GM12878 (cell line): ENCODE measurements at regions of chr15 and their contacts with region 1.

Region 1: DNA sequence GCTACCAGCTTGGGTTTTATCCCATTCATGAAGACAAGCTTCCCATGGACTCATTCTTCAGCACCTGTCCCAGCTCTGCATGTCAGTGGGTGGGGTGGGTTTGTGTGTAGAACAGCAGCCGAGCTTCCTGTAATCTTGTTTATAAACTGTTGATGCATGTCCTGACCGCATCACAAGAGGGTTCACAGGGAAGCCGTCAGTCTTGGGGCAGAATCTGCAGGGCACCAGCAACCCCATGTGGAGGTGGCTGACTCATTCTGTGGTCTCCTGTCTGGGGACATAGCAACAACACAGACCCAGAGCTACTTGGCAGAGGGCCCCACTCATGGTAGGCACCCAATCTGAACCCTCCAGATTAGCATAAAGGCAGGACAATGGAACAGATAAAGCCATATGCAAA is 35.6 kb downstream of the DAPK2 start:
- DNase-seq: peak; percentile 96
- ATAC-seq: peak; percentile 98
- H3K4me3 ChIP-seq: no peak overlapping the region
- H3K27ac ChIP-seq: peak overlapping the region; percentile 76
- H3K4me1 ChIP-seq: peaks cover 32% of the 10 kb centered on the region
- H3K27me3 ChIP-seq: no peaks in the 10 kb centered on the region
- CTCF ChIP-seq: peak; percentile 36 to 71 (median 54)
- EP300 ChIP-seq: peak; percentile 61 to 78; a peak in 2 of 4 replicates
- POLR2A ChIP-seq: no peak
- RAD21 ChIP-seq: peak; percentile 77

Region 2: GRCh38 chr15:63826528-63826927 is 184.2 kb before region 1 on chr15:
- CTCF ChIA-PET with region 1: interaction called, 17 read pairs
- POLR2A ChIA-PET with region 1: interaction called, 3 read pairs
- RAD21 ChIA-PET with region 1: interaction called, 8 read pairs
- SMC1A ChIA-PET with region 1: interaction called, 13 read pairs
- in situ Hi-C with region 1: no loop called
- intact Hi-C with region 1: no loop called
- DNase-seq: no peak
- ATAC-seq: no peak
- H3K4me3 ChIP-seq: no peak overlapping the region
- H3K27ac ChIP-seq: no peak overlapping the region
- H3K4me1 ChIP-seq: no peaks in the 10 kb centered on the region
- H3K27me3 ChIP-seq: no peaks in the 10 kb centered on the region
- CTCF ChIP-seq: peak; percentile 21 to 31 (median 27); a peak in 3 of 6 replicates
- EP300 ChIP-seq: no peak
- POLR2A ChIP-seq: no peak
- RAD21 ChIP-seq: peak; percentile 44

Region 3: DNA sequence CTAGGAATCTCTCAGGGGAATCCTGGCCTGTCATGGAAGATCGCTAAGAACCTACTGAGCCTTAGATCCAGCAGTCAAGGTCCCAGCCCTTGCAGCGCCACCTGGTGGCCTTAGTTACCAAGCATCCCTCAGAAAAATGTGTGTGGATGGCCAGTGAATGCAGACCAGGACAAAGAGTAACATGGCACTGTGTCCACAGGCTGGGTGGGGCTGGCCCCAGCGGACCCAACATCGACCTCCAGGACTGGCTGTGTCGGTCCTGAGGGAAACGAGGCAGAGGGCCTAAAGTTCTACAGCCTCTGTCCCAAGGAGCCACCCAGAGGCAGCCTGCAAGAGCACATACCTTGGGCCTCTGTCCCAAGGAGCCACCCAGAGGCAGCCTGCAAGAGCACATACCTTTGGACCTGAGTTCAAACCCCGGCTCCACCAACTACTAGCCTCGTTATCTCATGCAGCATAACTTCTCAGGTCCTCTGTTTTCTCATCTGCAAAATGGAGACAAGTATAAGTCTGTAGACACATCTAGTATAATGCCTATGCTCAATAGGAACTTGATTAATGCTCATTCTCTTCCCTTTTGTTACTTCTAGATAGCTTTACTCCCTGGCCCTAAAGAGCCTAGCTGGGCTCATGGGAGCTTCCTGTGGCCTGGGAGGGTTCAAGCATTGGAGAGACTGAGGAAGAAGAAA is 119.5 kb before region 1 on chr15:
- CTCF ChIA-PET with region 1: interaction called, 46 read pairs
- POLR2A ChIA-PET with region 1: interaction called, 7 read pairs
- RAD21 ChIA-PET with region 1: interaction called, 46 read pairs
- SMC1A ChIA-PET with region 1: interaction called, 57 read pairs
- in situ Hi-C with region 1: no loop called
- intact Hi-C with region 1: no loop called
- DNase-seq: peak; percentile 72
- ATAC-seq: peak; percentile 67
- H3K4me3 ChIP-seq: no peak overlapping the region
- H3K27ac ChIP-seq: peak overlapping the region; percentile 79
- H3K4me1 ChIP-seq: peaks cover 62% of the 10 kb centered on the region
- H3K27me3 ChIP-seq: no peaks in the 10 kb centered on the region
- CTCF ChIP-seq: peak; percentile 80 to 88 (median 86)
- EP300 ChIP-seq: no peak
- POLR2A ChIP-seq: no peak
- RAD21 ChIP-seq: peak; percentile 88

Region 4: DNA sequence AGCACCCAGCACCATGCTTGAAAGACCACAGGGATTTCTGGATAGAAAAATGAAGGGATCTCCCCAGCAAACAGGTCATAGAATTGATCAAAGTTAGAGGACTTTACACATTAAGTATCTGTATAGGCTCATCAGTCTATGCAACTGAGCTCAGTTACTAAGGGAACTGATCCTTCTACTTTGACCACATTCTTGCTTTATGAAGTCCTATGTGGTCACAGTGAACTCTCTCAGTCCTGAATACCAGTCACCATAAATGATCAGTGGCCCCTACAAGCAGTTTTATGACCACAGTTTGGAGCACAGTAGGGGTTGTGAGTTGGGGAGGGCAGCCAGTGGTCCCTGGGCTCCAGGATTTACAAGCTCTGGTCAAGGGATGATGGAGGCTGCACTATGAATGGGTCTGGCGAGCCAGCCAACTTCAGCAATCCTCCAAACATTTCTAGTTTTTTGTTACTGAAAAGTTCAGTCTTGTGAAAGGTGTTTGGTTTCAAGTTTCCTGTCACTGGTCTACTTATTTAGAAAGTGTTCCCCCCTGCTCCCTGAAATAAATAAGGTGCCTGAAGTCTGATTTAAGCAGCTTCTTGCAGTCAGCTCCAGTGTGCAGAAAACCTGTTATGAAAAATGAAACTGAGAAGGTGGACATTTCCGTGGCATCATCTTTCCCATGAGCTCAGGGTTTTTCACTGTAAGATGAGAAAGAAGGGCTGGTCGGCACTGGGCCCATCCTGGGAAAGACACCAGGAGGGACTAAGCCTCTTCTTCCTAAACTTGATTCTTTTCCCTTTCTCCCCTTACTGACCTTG is 39.9 kb before region 1 on chr15:
- CTCF ChIA-PET with region 1: interaction called, 22 read pairs
- POLR2A ChIA-PET with region 1: interaction called, 4 read pairs
- RAD21 ChIA-PET with region 1: interaction called, 40 read pairs
- SMC1A ChIA-PET with region 1: interaction called, 58 read pairs
- in situ Hi-C with region 1: no loop called
- intact Hi-C with region 1: loop called (anchors 1 kb)
- DNase-seq: peak; percentile 85
- ATAC-seq: peak; percentile 96
- H3K4me3 ChIP-seq: peak overlapping the region; percentile 24
- H3K27ac ChIP-seq: peak overlapping the region; percentile 95
- H3K4me1 ChIP-seq: peaks cover 48% of the 10 kb centered on the region
- H3K27me3 ChIP-seq: no peaks in the 10 kb centered on the region
- CTCF ChIP-seq: no peak
- EP300 ChIP-seq: peak; percentile 46 to 90; a peak in 3 of 4 replicates
- POLR2A ChIP-seq: no peak
- RAD21 ChIP-seq: no peak

Region 5: GRCh38 chr15:64024172-64025050 is 13.7 kb after region 1 on chr15:
- CTCF ChIA-PET with region 1: interaction called, 9 read pairs
- POLR2A ChIA-PET with region 1: interaction called, 3 read pairs
- RAD21 ChIA-PET with region 1: interaction called, 5 read pairs
- SMC1A ChIA-PET with region 1: interaction called, 10 read pairs
- in situ Hi-C with region 1: no loop called
- intact Hi-C with region 1: no loop called
- DNase-seq: no peak
- ATAC-seq: peak; percentile 62
- H3K4me3 ChIP-seq: no peak overlapping the region
- H3K27ac ChIP-seq: no peak overlapping the region
- H3K4me1 ChIP-seq: 0 out of 2 replicates have a peak, but pooled peaks cover 4% of the 10 kb centered on the region
- H3K27me3 ChIP-seq: no peaks in the 10 kb centered on the region
- CTCF ChIP-seq: 0 out of 6 replicates have a peak, but pooled peaks of 1 of the 3 experiments have one; percentile 4
- EP300 ChIP-seq: no peak
- POLR2A ChIP-seq: no peak
- RAD21 ChIP-seq: no peak

Region 6: GRCh38 chr15:64067564-64068030 is 56.9 kb after region 1 on chr15:
- CTCF ChIA-PET with region 1: interaction called, 30 read pairs
- POLR2A ChIA-PET with region 1: no interaction called
- RAD21 ChIA-PET with region 1: interaction called, 19 read pairs
- SMC1A ChIA-PET with region 1: interaction called, 14 read pairs
- in situ Hi-C with region 1: no loop called
- intact Hi-C with region 1: no loop called
- DNase-seq: peak; percentile 40
- ATAC-seq: peak; percentile 94
- H3K4me3 ChIP-seq: no peak overlapping the region
- H3K27ac ChIP-seq: no peak overlapping the region
- H3K4me1 ChIP-seq: peaks cover 13% of the 10 kb centered on the region
- H3K27me3 ChIP-seq: no peaks in the 10 kb centered on the region
- CTCF ChIP-seq: peak; percentile 72 to 83 (median 77)
- EP300 ChIP-seq: no peak
- POLR2A ChIP-seq: no peak
- RAD21 ChIP-seq: peak; percentile 89

Region 7: DNA sequence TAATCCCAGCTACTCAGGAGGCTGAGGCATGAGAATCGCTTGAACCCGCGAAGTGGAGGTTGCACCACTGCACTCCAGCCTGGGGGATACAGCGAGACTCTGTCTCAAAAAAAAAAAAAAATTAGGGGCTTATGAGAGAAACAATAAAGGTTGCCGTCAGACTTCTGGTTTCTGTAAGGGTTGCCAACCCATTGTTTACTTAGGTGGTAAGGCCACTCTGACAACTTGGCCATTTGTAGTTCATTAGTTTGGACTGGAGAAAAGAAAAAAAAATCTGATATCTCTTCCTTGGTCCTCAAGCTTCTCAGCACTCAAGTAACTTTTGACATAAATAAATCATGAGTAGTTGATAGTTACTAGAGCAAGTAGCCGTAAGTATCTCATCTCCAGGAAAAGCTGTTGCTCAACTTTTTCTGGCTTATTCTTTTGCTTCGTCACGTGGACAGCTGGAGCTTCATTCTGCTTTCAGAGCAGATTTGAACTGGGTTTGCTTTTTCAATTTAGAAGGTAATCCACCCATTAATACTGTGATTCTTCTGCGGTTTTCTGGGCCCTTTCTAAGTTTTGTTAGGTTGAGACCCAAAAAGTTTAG is 94.5 kb after region 1 on chr15:
- CTCF ChIA-PET with region 1: no interaction called
- POLR2A ChIA-PET with region 1: no interaction called
- RAD21 ChIA-PET with region 1: no interaction called
- SMC1A ChIA-PET with region 1: no interaction called
- in situ Hi-C with region 1: no loop called
- intact Hi-C with region 1: no loop called
- DNase-seq: no peak
- ATAC-seq: no peak
- H3K4me3 ChIP-seq: no peak overlapping the region
- H3K27ac ChIP-seq: no peak overlapping the region
- H3K4me1 ChIP-seq: peaks cover 7% of the 10 kb centered on the region
- H3K27me3 ChIP-seq: no peaks in the 10 kb centered on the region
- CTCF ChIP-seq: no peak
- EP300 ChIP-seq: no peak
- POLR2A ChIP-seq: no peak
- RAD21 ChIP-seq: no peak

Region 8: DNA sequence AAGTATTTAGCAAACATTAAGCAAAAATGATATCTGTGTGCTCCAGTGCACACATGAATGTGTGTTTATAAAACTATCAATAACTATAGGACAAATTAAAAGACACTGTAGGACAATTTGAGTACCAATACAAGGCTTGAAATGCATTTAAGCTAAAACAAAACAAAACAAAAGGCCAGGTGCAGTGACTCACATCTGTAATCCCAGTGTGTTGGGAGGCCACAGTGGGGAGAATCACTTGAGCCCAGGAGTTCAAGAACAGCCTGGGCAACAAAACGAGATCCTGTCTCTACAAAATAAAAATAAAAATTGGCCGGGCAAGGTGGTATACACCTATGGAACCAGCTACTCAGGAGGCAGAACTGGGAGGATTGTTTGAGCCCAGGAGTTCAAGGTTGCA is 294.5 kb after region 1 on chr15:
- CTCF ChIA-PET with region 1: no interaction called
- POLR2A ChIA-PET with region 1: no interaction called
- RAD21 ChIA-PET with region 1: no interaction called
- SMC1A ChIA-PET with region 1: no interaction called
- in situ Hi-C with region 1: no loop called
- intact Hi-C with region 1: no loop called
- DNase-seq: no peak
- ATAC-seq: no peak
- H3K4me3 ChIP-seq: no peak overlapping the region
- H3K27ac ChIP-seq: no peak overlapping the region
- H3K4me1 ChIP-seq: no peaks in the 10 kb centered on the region
- H3K27me3 ChIP-seq: no peaks in the 10 kb centered on the region
- CTCF ChIP-seq: no peak
- EP300 ChIP-seq: no peak
- POLR2A ChIP-seq: no peak
- RAD21 ChIP-seq: no peak

Region 9: DNA sequence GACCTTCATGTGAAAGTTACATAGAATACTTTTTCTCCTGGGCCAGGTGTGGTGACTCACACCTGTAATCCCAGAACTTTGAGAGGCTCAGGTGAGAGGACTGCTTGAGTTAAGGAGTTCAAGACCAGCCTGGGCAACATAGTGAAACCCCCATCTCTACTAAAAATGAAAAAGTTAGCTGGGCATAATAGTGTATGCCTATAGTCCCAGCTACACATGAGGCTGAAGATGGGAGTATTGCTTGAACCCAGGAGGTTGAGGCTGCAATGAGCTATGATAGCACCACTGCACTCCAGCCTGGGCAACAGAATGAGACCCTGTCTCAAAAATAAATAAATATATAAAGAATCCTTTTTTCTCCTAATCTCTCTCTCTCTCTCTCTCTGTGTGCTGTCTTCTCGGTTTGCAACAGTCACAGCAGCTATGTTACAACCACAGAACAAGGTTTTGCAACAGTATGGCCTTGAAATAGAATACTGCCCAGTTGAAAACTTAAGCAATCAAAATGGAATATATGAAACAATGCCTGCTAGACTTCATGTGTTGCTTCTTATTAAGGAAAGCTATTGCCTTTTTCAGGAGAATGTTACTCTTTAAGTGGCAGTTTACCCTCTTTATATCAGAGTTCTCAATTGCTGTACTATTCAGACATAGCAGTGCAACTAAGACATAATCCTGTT is 1793.7 kb after region 1 on chr15:
- CTCF ChIA-PET with region 1: no interaction called
- POLR2A ChIA-PET with region 1: no interaction called
- RAD21 ChIA-PET with region 1: no interaction called
- SMC1A ChIA-PET with region 1: no interaction called
- in situ Hi-C with region 1: no loop called
- intact Hi-C with region 1: no loop called
- DNase-seq: no peak
- ATAC-seq: peak; percentile 40
- H3K4me3 ChIP-seq: no peak overlapping the region
- H3K27ac ChIP-seq: peak overlapping the region; percentile 10; the same call in 1 of the 2 replicates
- H3K4me1 ChIP-seq: peaks cover 27% of the 10 kb centered on the region
- H3K27me3 ChIP-seq: no peaks in the 10 kb centered on the region
- CTCF ChIP-seq: no peak
- EP300 ChIP-seq: no peak
- POLR2A ChIP-seq: no peak
- RAD21 ChIP-seq: no peak